ENCODE measurements at regions of chr2 and their contacts with region 1.

Region 1: GRCh38 chr2:69816923-69817542 is 12.4 kb upstream of the GMCL1 start:
- DNase-seq: peak; percentile 87
- ATAC-seq: peak; percentile 88
- H3K4me3 ChIP-seq: no peak overlapping the region
- H3K4me3 Mint-ChIP-seq: no peak overlapping the region
- H3K27ac ChIP-seq: no peak overlapping the region
- H3K27ac Mint-ChIP-seq: no peak overlapping the region
- H3K4me1 ChIP-seq: peaks cover 0 to 6% of the 10 kb centered on the region in 2 donors
- H3K4me1 Mint-ChIP-seq: peaks cover 3% of the 10 kb centered on the region
- H3K27me3 ChIP-seq: no peaks in the 10 kb centered on the region
- H3K27me3 Mint-ChIP-seq: no peaks in the 10 kb centered on the region
- CTCF ChIP-seq: peak; percentile 92

Region 2: DNA sequence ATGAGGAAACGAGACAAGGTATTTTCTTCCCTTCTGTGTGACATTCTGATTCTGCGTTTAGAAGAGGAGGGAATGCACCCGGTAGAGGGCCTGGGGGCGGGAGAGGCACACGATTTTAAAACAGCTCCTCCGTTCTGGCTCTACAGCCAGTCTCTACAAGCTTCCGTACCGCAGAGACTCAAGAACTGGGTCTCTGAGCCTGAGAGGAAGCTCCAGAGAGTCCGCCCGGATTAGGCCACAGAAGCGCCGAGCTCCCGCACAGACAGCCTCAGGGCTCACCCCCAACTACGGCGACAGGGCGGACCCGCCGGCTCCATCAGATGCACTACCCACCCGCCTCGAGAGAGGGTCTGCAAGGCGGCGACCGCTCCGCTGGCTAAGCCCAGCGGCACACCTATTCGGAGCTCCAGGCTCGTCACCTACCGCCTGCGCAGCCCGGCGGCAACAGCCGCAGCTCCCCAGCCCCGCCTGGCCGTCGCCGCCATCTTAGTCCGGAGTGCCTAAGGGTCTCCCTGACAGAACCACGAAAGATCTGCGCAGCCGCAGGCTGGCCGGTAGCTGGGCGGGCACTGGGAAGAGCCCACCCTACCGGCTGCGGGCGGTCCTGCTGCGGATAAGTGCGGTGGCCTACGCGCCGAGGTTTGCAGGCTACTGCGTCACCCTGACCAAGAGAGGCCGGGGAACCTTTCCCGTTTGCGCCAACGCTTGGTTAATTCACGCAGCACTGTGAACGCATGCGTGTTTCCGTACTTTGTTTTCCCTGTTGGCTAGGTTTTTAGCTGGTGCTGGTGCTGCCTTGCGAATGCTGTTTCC is 379.9 kb before region 1 on chr2 and contains the start of gene NFU1:
- CTCF ChIA-PET with region 1: no interaction called
- POLR2A ChIA-PET with region 1: no interaction called
- intact Hi-C with region 1: loop called (anchors 10 kb)
- DNase-seq: peak; percentile 94
- ATAC-seq: peak; percentile 94
- H3K4me3 ChIP-seq: peak within 1 kb of the TSS; percentile 67 to 92 (median 78)
- H3K4me3 Mint-ChIP-seq: peak within 1 kb of the TSS; percentile 97
- H3K27ac ChIP-seq: peak within 1 kb of the TSS; percentile 91 to 93
- H3K27ac Mint-ChIP-seq: peak within 1 kb of the TSS; percentile 99
- H3K4me1 ChIP-seq: peaks cover 27 to 33% of the 10 kb centered on the region in 2 donors
- H3K4me1 Mint-ChIP-seq: peaks cover 41% of the 10 kb centered on the region
- H3K27me3 ChIP-seq: no peaks in the 10 kb centered on the region
- H3K27me3 Mint-ChIP-seq: no peaks in the 10 kb centered on the region
- CTCF ChIP-seq: peak; percentile 74
- total RNA-seq, gene NFU1: 33.8 and 40.6 TPM in 2 replicates

Region 3: DNA sequence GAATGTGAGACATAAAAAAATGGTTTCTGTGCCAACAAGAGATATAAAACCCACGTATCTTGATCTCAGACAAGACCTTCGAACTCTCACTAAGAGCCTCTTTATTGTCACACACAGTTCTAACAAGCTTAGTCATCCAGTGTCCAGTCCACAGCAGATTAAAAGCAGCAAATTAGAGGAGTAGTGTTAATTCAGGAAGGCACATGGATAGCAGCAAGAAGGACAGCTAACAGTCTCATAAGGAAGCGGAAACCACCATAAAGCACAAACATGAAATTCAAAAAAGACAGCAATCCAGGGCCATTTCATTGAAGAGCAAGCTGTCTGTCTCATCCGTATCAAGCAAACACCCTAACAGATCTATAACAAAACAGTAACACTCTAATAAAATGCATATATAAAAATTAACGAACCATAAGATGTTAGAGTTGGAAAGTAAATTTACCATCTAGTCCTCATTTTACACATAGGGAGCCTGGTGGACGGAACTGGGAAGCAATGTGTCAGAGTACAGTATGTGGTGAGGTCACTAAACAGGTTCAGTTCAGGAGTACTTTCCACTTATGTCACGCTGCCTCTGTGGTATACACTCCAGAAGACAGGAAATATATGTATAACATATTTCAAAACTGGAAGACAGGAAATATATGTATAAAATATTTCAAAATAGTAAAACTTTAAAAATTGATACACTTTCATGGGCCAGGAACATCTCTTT is 191.8 kb before region 1 on chr2:
- CTCF ChIA-PET with region 1: no interaction called
- POLR2A ChIA-PET with region 1: no interaction called
- intact Hi-C with region 1: no loop called
- DNase-seq: no peak
- ATAC-seq: no peak
- H3K4me3 ChIP-seq: no peak overlapping the region
- H3K4me3 Mint-ChIP-seq: no peak overlapping the region
- H3K27ac ChIP-seq: no peak overlapping the region
- H3K27ac Mint-ChIP-seq: no peak overlapping the region
- H3K4me1 ChIP-seq: peaks cover 0 to 3% of the 10 kb centered on the region in 2 donors
- H3K4me1 Mint-ChIP-seq: peaks cover 3% of the 10 kb centered on the region
- H3K27me3 ChIP-seq: peaks cover 0 to 2% (median 0%) of the 10 kb centered on the region in 4 experiments
- H3K27me3 Mint-ChIP-seq: peaks cover 13% of the 10 kb centered on the region
- CTCF ChIP-seq: no peak

Region 4: DNA sequence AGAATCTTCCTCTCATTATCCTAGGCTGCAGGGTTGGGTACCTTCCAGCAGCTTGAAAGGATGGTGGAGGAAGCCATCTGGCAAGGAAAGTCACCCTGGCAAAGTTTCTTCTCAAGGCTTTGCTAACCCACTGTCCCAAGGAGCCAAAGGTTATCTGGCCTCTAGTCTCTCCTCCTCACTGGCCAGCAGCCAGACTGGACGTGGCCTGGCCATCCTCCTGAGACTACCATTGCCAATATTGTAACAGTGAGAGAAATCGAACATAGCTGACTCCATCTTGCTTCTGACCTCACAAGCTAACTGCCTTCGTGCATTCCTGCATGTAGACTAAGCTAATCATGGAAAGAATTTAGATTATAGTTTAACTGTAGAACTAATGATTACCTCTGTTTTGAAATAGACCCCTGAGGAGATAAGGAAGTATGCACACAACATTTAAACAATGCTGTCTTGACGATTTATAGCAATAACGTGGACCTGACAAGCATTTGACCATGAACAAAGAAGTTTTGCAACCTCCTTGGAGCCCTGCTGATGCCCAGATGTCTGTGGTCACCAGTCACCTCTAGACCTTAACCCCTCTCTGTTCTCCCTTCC is 82.9 kb before region 1 on chr2:
- CTCF ChIA-PET with region 1: interaction called, 57 read pairs
- POLR2A ChIA-PET with region 1: no interaction called
- intact Hi-C with region 1: no loop called
- DNase-seq: no peak
- ATAC-seq: no peak
- H3K4me3 ChIP-seq: no peak overlapping the region
- H3K4me3 Mint-ChIP-seq: no peak overlapping the region
- H3K27ac ChIP-seq: peak overlapping the region in 1 of 2 donors; percentile 5
- H3K27ac Mint-ChIP-seq: no peak overlapping the region
- H3K4me1 ChIP-seq: peaks cover 43 to 48% of the 10 kb centered on the region in 2 donors
- H3K4me1 Mint-ChIP-seq: peaks cover 44% of the 10 kb centered on the region
- H3K27me3 ChIP-seq: no peaks in the 10 kb centered on the region
- H3K27me3 Mint-ChIP-seq: no peaks in the 10 kb centered on the region
- CTCF ChIP-seq: no peak

Region 5: GRCh38 chr2:69770193-69771146 is 46.6 kb before region 1 on chr2:
- CTCF ChIA-PET with region 1: interaction called, 10 read pairs
- POLR2A ChIA-PET with region 1: no interaction called
- intact Hi-C with region 1: loop called (anchors 1 kb)
- DNase-seq: no peak
- ATAC-seq: no peak
- H3K4me3 ChIP-seq: no peak overlapping the region
- H3K4me3 Mint-ChIP-seq: peak overlapping the region; percentile 8
- H3K27ac ChIP-seq: no peak overlapping the region
- H3K27ac Mint-ChIP-seq: peak overlapping the region; percentile 21
- H3K4me1 ChIP-seq: peaks cover 58 to 61% of the 10 kb centered on the region in 2 donors
- H3K4me1 Mint-ChIP-seq: peaks cover 58% of the 10 kb centered on the region
- H3K27me3 ChIP-seq: no peaks in the 10 kb centered on the region
- H3K27me3 Mint-ChIP-seq: no peaks in the 10 kb centered on the region
- CTCF ChIP-seq: no peak

Region 6: DNA sequence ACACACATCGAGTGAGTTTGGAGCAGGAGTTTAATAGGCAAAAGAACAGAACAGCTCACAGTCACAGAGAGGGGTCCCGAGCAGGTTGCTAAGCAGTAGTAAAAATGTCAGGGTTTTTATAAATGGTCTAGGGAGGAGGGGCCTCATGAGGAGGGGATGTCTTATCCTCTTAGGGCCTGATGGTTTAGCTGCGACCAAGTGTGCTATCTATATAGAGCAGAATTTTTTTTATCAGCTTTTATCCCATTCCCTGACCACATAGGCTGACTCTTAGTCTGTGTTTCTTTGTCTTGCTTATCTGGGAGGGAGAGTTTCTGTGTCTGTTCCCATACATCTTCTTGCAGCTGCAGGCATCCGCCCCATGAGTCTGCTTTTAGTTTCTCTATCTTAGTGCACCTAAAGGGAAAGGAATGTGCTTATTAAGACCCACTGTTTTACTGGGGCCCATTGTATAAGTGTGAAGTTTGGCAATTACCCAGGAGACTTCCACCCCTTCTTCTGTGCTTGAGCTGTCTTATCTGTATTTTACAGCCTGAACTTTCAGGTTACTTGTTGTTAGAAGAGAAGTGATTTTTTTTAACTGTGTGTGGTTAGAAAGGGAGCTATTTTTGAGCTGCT is 18.0 kb before region 1 on chr2:
- CTCF ChIA-PET with region 1: interaction called, 31 read pairs
- POLR2A ChIA-PET with region 1: no interaction called
- intact Hi-C with region 1: loop called (anchors 2 kb)
- DNase-seq: peak; percentile 35
- ATAC-seq: peak; percentile 46
- H3K4me3 ChIP-seq: peak overlapping the region in 4 of 5 experiments; percentile 11 to 42 (median 38)
- H3K4me3 Mint-ChIP-seq: peak overlapping the region; percentile 88
- H3K27ac ChIP-seq: peak overlapping the region; percentile 42 to 71
- H3K27ac Mint-ChIP-seq: peak overlapping the region; percentile 81
- H3K4me1 ChIP-seq: peaks cover 58 to 70% of the 10 kb centered on the region in 2 donors
- H3K4me1 Mint-ChIP-seq: peaks cover 60% of the 10 kb centered on the region
- H3K27me3 ChIP-seq: no peaks in the 10 kb centered on the region
- H3K27me3 Mint-ChIP-seq: no peaks in the 10 kb centered on the region
- CTCF ChIP-seq: no peak

Region 7: GRCh38 chr2:69829256-69830046 is 12.4 kb after region 1 on chr2 and contains the start of gene GMCL1:
- CTCF ChIA-PET with region 1: interaction called, 43 read pairs
- POLR2A ChIA-PET with region 1: interaction called, 3 read pairs
- intact Hi-C with region 1: no loop called
- DNase-seq: peak; percentile 99
- ATAC-seq: peak; percentile 96
- H3K4me3 ChIP-seq: peak within 1 kb of the TSS; percentile 46 to 97 (median 72)
- H3K4me3 Mint-ChIP-seq: peak within 1 kb of the TSS; percentile 99
- H3K27ac ChIP-seq: peak within 1 kb of the TSS; percentile 94 to 98
- H3K27ac Mint-ChIP-seq: peak within 1 kb of the TSS; percentile 99
- H3K4me1 ChIP-seq: peaks cover 24 to 26% of the 10 kb centered on the region in 2 donors
- H3K4me1 Mint-ChIP-seq: peaks cover 38% of the 10 kb centered on the region
- H3K27me3 ChIP-seq: no peaks in the 10 kb centered on the region
- H3K27me3 Mint-ChIP-seq: no peaks in the 10 kb centered on the region
- CTCF ChIP-seq: no peak
- total RNA-seq, gene GMCL1: 22.0 and 26.3 TPM in 2 replicates

Region 8: GRCh38 chr2:69989422-69990126 is 172.5 kb after region 1 on chr2:
- CTCF ChIA-PET with region 1: no interaction called
- POLR2A ChIA-PET with region 1: no interaction called
- intact Hi-C with region 1: no loop called
- DNase-seq: no peak
- ATAC-seq: no peak
- H3K4me3 ChIP-seq: no peak overlapping the region
- H3K4me3 Mint-ChIP-seq: no peak overlapping the region
- H3K27ac ChIP-seq: no peak overlapping the region
- H3K27ac Mint-ChIP-seq: no peak overlapping the region
- H3K4me1 ChIP-seq: no peaks in the 10 kb centered on the region
- H3K4me1 Mint-ChIP-seq: no peaks in the 10 kb centered on the region
- H3K27me3 ChIP-seq: no peaks in the 10 kb centered on the region
- H3K27me3 Mint-ChIP-seq: no peaks in the 10 kb centered on the region
- CTCF ChIP-seq: no peak

Region 9: GRCh38 chr2:70248181-70248847 is 431.3 kb after region 1 on chr2 and contains the start of gene TIA1:
- CTCF ChIA-PET with region 1: no interaction called
- POLR2A ChIA-PET with region 1: no interaction called
- intact Hi-C with region 1: no loop called
- DNase-seq: peak; percentile 99
- ATAC-seq: peak; percentile 96
- H3K4me3 ChIP-seq: peak within 1 kb of the TSS; percentile 70 to 98 (median 95)
- H3K4me3 Mint-ChIP-seq: peak within 1 kb of the TSS; percentile 98
- H3K27ac ChIP-seq: peak within 1 kb of the TSS; percentile 86 to 94
- H3K27ac Mint-ChIP-seq: peak within 1 kb of the TSS; percentile 98
- H3K4me1 ChIP-seq: peaks cover 24 to 29% of the 10 kb centered on the region in 2 donors
- H3K4me1 Mint-ChIP-seq: peaks cover 35% of the 10 kb centered on the region
- H3K27me3 ChIP-seq: no peaks in the 10 kb centered on the region
- H3K27me3 Mint-ChIP-seq: no peaks in the 10 kb centered on the region
- CTCF ChIP-seq: no peak
- total RNA-seq, gene TIA1: 214 and 243 TPM in 2 replicates

Measured in B cell (primary cell).